T-cell (primary cell): ENCODE measurements at regions of chr15 and their contacts with region 1.

Region 1: DNA sequence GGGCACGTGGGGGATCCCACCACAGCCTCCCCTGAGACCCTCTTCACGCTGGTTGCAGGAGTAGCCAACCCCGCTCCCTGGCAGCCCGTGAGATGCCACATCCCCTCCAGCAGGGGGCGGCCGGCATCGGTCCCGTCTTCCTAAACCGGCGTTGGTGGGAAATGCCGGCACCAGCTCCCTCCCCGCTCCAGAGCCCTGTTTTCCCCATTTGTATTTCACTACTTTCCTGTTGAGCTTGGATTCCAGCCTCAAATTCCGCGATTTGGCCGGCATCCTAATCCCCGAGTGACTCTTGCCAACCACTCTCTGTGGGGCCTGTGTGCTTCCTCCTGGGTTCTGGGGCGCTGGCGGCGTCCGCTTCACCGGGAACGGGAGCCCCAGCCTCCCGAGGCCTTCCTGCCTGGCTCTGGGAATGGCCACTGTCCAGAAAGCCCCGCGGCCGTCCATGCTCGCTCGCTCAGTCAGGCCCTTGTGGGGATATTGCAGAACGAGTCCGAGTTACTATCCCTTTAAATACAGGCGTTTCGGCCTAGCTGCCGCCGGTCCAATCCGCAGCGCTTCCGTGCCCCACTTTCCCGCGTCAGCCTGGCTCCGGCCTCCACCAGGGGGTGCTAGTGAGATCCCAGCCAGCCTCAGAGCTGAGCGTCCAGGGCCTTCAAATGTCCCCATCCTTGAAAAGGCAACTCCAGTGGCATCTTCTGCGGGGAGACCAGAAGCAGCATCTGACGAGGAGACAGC is 8.1 kb upstream of the ADAMTS17 start:
- DNase-seq: peak; percentile 53 to 90 (median 75)
- ATAC-seq: peak; percentile 94 to 96 (median 95)
- H3K4me3 ChIP-seq: peak overlapping the region; percentile 91 to 95
- H3K4me3 Mint-ChIP-seq: peak overlapping the region; percentile 89 to 97 (median 92)
- H3K27ac ChIP-seq: peak overlapping the region; percentile 65
- H3K27ac Mint-ChIP-seq: peak overlapping the region; percentile 81 to 85
- H3K4me1 ChIP-seq: peaks cover 0 to 13% of the 10 kb centered on the region in 2 experiments
- H3K4me1 Mint-ChIP-seq: peaks cover 7 to 15% (median 10%) of the 10 kb centered on the region in 3 donors
- H3K27me3 ChIP-seq: peaks cover 0 to 2% of the 10 kb centered on the region in 2 experiments
- H3K27me3 Mint-ChIP-seq: peaks cover 17 to 23% of the 10 kb centered on the region in 2 donors

Region 2: GRCh38 chr15:100330629-100331215 is 19.1 kb before region 1 on chr15:
- CTCF ChIA-PET with region 1: interaction called in 1 of 2 experiments, 50 read pairs
- POLR2A ChIA-PET with region 1: interaction called, 3 read pairs
- DNase-seq: peak in 32 of 35 experiments; percentile 24 to 71 (median 42)
- ATAC-seq: peak; percentile 94 to 96 (median 95)
- H3K4me3 ChIP-seq: peak overlapping the region; percentile 38 to 64
- H3K4me3 Mint-ChIP-seq: peak overlapping the region; percentile 59 to 80 (median 66)
- H3K27ac ChIP-seq: peak overlapping the region; percentile 58
- H3K27ac Mint-ChIP-seq: peak overlapping the region; percentile 76 to 85
- H3K4me1 ChIP-seq: peaks cover 30 to 71% of the 10 kb centered on the region in 2 experiments
- H3K4me1 Mint-ChIP-seq: peaks cover 81 to 83% (median 83%) of the 10 kb centered on the region in 3 donors
- H3K27me3 ChIP-seq: no peaks in the 10 kb centered on the region
- H3K27me3 Mint-ChIP-seq: peaks cover 0 to 3% of the 10 kb centered on the region in 2 donors

Region 3: DNA sequence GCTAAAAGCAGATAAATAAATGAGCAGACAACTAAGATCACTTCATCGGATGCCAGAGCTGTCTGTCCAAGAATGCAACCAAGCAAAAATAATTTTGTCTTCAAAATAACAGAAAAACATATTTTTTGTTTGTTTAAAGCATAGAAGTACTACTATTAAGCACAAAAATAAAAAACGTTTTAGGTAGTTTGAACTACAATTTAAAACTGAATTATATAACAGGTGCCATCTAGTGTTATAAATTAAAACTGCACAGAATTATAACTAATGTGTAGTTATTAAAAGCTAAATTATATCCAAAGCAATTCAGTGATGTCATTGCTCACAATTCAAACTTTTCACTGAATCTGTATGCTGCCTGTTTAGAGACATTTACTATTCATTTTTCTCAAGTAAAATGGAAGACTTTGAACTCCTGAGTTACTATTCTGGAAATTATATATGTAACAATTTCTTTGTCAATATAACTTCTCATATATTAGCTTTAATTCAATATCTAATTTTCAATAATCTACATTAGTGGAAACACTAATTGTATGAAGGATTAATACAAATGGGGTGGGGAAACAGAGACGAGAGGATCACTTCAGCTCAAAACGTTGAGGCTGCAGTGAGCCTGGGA is 222.6 kb after region 1 on chr15:
- CTCF ChIA-PET with region 1: interaction called, 16 to 51 read pairs
- POLR2A ChIA-PET with region 1: no interaction called
- DNase-seq: peak in 1 of 35 experiments; percentile 52
- ATAC-seq: peak in 2 of 4 experiments; percentile 28 to 49
- H3K4me3 ChIP-seq: no peak overlapping the region
- H3K4me3 Mint-ChIP-seq: peak overlapping the region; percentile 58 to 73 (median 65)
- H3K27ac ChIP-seq: peak overlapping the region; percentile 51
- H3K27ac Mint-ChIP-seq: peak overlapping the region; percentile 94 to 96
- H3K4me1 ChIP-seq: peaks cover 17 to 24% of the 10 kb centered on the region in 2 experiments
- H3K4me1 Mint-ChIP-seq: peaks cover 63 to 69% (median 64%) of the 10 kb centered on the region in 3 donors
- H3K27me3 ChIP-seq: no peaks in the 10 kb centered on the region
- H3K27me3 Mint-ChIP-seq: no peaks in the 10 kb centered on the region

Region 4: GRCh38 chr15:100596792-100597191 is 246.9 kb after region 1 on chr15:
- CTCF ChIA-PET with region 1: interaction called, 3 to 13 read pairs
- POLR2A ChIA-PET with region 1: interaction called in 1 of 2 experiments, 4 read pairs
- DNase-seq: peak; percentile 55 to 96 (median 89)
- ATAC-seq: peak; percentile 89 to 92 (median 90)
- H3K4me3 ChIP-seq: peak overlapping the region; percentile 32 to 44
- H3K4me3 Mint-ChIP-seq: peak overlapping the region in 2 of 3 donors; percentile 80 to 88
- H3K27ac ChIP-seq: peak overlapping the region; percentile 89
- H3K27ac Mint-ChIP-seq: peak overlapping the region; percentile 94 to 99
- H3K4me1 ChIP-seq: peaks cover 63 to 65% of the 10 kb centered on the region in 2 experiments
- H3K4me1 Mint-ChIP-seq: peaks cover 76 to 80% (median 79%) of the 10 kb centered on the region in 3 donors
- H3K27me3 ChIP-seq: no peaks in the 10 kb centered on the region
- H3K27me3 Mint-ChIP-seq: no peaks in the 10 kb centered on the region

Region 5: DNA sequence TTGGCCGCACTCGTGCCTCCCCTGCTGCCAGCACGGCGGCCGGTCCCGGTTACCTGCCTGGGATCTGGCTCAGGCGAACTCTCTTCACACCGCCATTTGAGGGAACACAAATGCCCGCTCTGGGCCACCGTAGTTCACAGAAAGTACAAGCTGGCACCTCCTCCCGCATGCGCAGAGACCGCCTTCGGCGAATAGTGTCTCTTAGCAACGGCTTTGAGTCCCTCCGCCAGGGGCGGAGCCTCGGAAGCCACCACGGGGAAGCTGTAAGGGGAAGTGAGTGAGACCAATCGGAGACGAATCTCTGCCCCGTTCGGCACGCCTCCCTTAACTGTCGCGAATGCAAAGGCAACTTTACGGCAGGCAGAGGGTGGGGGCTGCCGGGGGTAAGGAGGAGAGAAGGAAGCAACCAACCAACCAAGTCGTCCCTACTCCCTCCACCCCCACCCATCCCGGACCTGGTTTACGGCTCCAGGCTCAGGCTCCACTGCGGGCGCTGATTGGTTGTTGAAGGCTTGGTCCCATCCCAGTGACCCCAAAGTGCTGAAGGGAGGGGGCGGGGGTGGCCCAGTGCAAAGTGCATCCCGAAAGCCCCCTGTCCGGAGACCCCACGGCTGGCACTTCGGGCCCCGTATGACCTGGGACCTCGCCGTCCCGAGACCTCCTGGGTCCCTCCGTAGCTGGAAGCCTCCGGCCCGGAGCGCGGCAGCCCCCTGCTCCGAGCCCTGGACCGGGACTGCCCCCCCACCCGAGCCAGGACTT is 252.4 kb after region 1 on chr15 and contains the starts of genes ASB7 and LINS1:
- CTCF ChIA-PET with region 1: interaction called in 1 of 2 experiments, 11 read pairs
- POLR2A ChIA-PET with region 1: interaction called in 1 of 2 experiments, 4 read pairs
- DNase-seq: peak; percentile 98 to 100 (median 100)
- ATAC-seq: peak; percentile 88 to 92 (median 88)
- H3K4me3 ChIP-seq: peak within 1 kb of the TSS; percentile 84 to 96
- H3K4me3 Mint-ChIP-seq: no peak within 1 kb of the TSS
- H3K27ac ChIP-seq: peak within 1 kb of the TSS; percentile 84
- H3K27ac Mint-ChIP-seq: peak within 1 kb of the TSS in 1 of 2 donors; percentile 87
- H3K4me1 ChIP-seq: peaks cover 37 to 46% of the 10 kb centered on the region in 2 experiments
- H3K4me1 Mint-ChIP-seq: peaks cover 62 to 68% (median 66%) of the 10 kb centered on the region in 3 donors
- H3K27me3 ChIP-seq: no peaks in the 10 kb centered on the region
- H3K27me3 Mint-ChIP-seq: no peaks in the 10 kb centered on the region
- total RNA-seq, gene ASB7: 17.7 to 24.8 (median 21.8) TPM
- total RNA-seq, gene LINS1: 42.9 to 88.1 (median 77.0) TPM

Region 6: GRCh38 chr15:100671858-100672543 is 322.1 kb after region 1 on chr15:
- CTCF ChIA-PET with region 1: no interaction called
- POLR2A ChIA-PET with region 1: no interaction called
- DNase-seq: no peak
- ATAC-seq: no peak
- H3K4me3 ChIP-seq: no peak overlapping the region
- H3K4me3 Mint-ChIP-seq: no peak overlapping the region
- H3K27ac ChIP-seq: no peak overlapping the region
- H3K27ac Mint-ChIP-seq: no peak overlapping the region
- H3K4me1 ChIP-seq: no peaks in the 10 kb centered on the region
- H3K4me1 Mint-ChIP-seq: no peaks in the 10 kb centered on the region
- H3K27me3 ChIP-seq: peaks cover 0 to 9% of the 10 kb centered on the region in 2 experiments
- H3K27me3 Mint-ChIP-seq: peaks cover 4 to 8% of the 10 kb centered on the region in 2 donors

Region 7: GRCh38 chr15:100778831-100779288 is 429.0 kb after region 1 on chr15:
- CTCF ChIA-PET with region 1: no interaction called
- POLR2A ChIA-PET with region 1: no interaction called
- DNase-seq: peak in 1 of 35 experiments; percentile 14
- ATAC-seq: no peak
- H3K4me3 ChIP-seq: no peak overlapping the region
- H3K4me3 Mint-ChIP-seq: no peak overlapping the region
- H3K27ac ChIP-seq: no peak overlapping the region
- H3K27ac Mint-ChIP-seq: no peak overlapping the region
- H3K4me1 ChIP-seq: no peaks in the 10 kb centered on the region
- H3K4me1 Mint-ChIP-seq: peaks cover 0 to 2% (median 0%) of the 10 kb centered on the region in 3 donors
- H3K27me3 ChIP-seq: peaks cover 0 to 22% of the 10 kb centered on the region in 2 experiments
- H3K27me3 Mint-ChIP-seq: peaks cover 13 to 28% of the 10 kb centered on the region in 2 donors